ENCODE measurements at regions of chr19 and their contacts with region 1.

Region 1: DNA sequence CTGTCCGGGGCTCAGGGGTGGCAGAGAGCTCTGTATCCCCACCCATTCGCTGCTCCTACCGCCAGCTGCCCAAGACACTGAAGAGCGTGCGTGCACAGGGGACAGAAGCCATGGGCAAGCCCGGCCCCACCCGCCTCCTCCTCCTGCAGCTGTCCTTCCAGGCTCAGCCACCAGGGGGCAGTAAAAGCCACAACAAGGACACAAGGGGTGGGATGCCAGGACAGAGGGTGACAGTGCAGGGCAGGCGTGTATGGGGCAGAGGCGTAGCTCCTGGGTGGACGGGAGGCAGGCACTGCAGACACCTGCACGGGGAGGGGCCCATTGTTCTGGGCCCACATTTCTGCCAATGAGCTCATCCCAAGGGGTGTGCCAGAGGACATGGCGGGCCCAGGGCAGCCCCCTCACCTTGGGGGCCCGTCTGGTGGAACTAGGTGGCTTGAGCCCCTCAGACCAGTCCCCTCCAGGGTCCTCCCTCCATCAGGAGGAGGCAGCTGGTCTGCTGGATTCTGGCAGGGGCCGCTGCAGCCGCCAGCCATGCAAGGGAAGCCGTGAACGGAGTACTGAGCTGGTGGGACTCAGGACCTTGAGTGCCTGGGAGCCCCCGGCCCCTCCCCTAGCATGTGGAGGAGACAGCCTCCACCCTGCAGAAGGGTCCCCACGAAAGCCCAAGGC is 61.1 kb downstream of the MLLT1 start:
- H3K4me3 Mint-ChIP-seq: no peak overlapping the region
- H3K27ac Mint-ChIP-seq: peak overlapping the region; percentile 37
- H3K4me1 Mint-ChIP-seq: peaks cover 10% of the 10 kb centered on the region
- H3K27me3 Mint-ChIP-seq: no peaks in the 10 kb centered on the region

Region 2: GRCh38 chr19:6125571-6125989 is 93.0 kb before region 1 on chr19:
- intact Hi-C with region 1: loop called (anchors 5 kb)
- H3K4me3 Mint-ChIP-seq: no peak overlapping the region
- H3K27ac Mint-ChIP-seq: no peak overlapping the region
- H3K4me1 Mint-ChIP-seq: no peaks in the 10 kb centered on the region
- H3K27me3 Mint-ChIP-seq: peaks cover 5% of the 10 kb centered on the region

Region 3: DNA sequence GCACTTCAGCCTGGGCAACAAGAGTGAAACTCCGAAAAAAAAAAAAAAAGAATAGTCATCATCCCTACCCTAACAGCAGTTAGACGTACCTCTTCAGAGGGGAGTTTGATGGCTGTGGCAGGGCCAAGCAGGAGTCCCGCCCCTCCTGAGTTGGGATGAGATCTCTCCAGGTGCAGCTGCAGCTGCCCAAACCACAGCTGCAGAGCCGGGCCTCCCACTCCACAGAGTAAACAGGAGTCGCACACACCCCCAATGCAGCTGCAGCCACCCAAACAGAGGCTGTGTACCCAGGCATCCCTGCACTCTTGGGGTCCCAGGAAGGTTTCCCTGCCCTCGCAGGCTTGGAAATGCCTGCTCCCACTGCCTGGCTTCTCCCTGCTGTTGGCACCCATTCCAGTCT is 78.6 kb after region 1 on chr19:
- intact Hi-C with region 1: loop called (anchors 1 kb)
- H3K4me3 Mint-ChIP-seq: no peak overlapping the region
- H3K27ac Mint-ChIP-seq: no peak overlapping the region
- H3K4me1 Mint-ChIP-seq: no peaks in the 10 kb centered on the region
- H3K27me3 Mint-ChIP-seq: peaks cover 5% of the 10 kb centered on the region